Ovary (tissue), 10 donors: ENCODE measurements at regions of chr17 and their contacts with region 1.

Region 1: GRCh38 chr17:32664936-32665583 is 178.3 kb downstream of the CDK5R1 start:
- DNase-seq: no peak
- H3K4me3 ChIP-seq: no peak overlapping the region
- H3K27ac ChIP-seq: no peak overlapping the region
- H3K4me1 ChIP-seq: no peaks in the 10 kb centered on the region
- H3K27me3 ChIP-seq: no peaks in the 10 kb centered on the region
- CTCF ChIP-seq: no peak
- EP300 ChIP-seq: no peak
- POLR2A ChIP-seq: no peak

Region 2: DNA sequence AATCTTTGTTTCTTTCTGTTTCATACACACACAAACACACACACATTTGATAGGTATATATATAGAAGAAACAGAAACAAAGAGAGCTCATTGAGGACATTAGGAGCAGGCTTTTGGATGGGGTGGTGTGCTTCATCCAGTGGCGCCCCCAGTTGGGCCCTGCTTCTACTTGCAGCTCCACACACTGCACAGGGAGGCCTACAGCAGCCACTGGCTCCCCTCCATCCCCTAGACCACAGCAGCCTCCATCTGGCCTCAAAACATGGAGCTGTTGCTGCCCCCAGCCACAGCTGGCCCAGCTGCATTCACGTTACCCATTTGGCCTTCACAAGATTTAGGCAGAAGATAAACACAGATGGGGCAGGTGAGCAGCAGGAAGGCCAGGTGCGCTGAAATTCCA is 1603.4 kb before region 1 on chr17:
- intact Hi-C with region 1: no loop called
- DNase-seq: no peak
- H3K4me3 ChIP-seq: no peak overlapping the region
- H3K27ac ChIP-seq: no peak overlapping the region
- H3K4me1 ChIP-seq: no peaks in the 10 kb centered on the region
- H3K27me3 ChIP-seq: no peaks in the 10 kb centered on the region
- CTCF ChIP-seq: no peak
- EP300 ChIP-seq: no peak
- POLR2A ChIP-seq: no peak

Region 3: GRCh38 chr17:32482568-32483320 is 182.3 kb before region 1 on chr17:
- intact Hi-C with region 1: no loop called
- DNase-seq: no peak
- H3K4me3 ChIP-seq: no peak overlapping the region
- H3K27ac ChIP-seq: peak overlapping the region in 1 of 2 donors; percentile 95
- H3K4me1 ChIP-seq: peaks cover 9% of the 10 kb centered on the region
- H3K27me3 ChIP-seq: no peaks in the 10 kb centered on the region
- CTCF ChIP-seq: no peak
- EP300 ChIP-seq: no peak
- POLR2A ChIP-seq: no peak

Region 4: GRCh38 chr17:32609085-32609484 is 56.0 kb before region 1 on chr17:
- intact Hi-C with region 1: no loop called
- DNase-seq: no peak
- H3K4me3 ChIP-seq: no peak overlapping the region
- H3K27ac ChIP-seq: no peak overlapping the region
- H3K4me1 ChIP-seq: no peaks in the 10 kb centered on the region
- H3K27me3 ChIP-seq: no peaks in the 10 kb centered on the region
- CTCF ChIP-seq: no peak
- EP300 ChIP-seq: no peak
- POLR2A ChIP-seq: no peak

Region 5: GRCh38 chr17:32755045-32755805 is 90.2 kb after region 1 on chr17:
- intact Hi-C with region 1: loop called in 1 of 4 experiments (anchors 10 kb)
- DNase-seq: no peak
- H3K4me3 ChIP-seq: no peak overlapping the region
- H3K27ac ChIP-seq: peak overlapping the region in 1 of 2 donors; percentile 79
- H3K4me1 ChIP-seq: peaks cover 3% of the 10 kb centered on the region
- H3K27me3 ChIP-seq: no peaks in the 10 kb centered on the region
- CTCF ChIP-seq: peak; percentile 34 to 78 (median 77)
- EP300 ChIP-seq: no peak
- POLR2A ChIP-seq: no peak